Panc1 (cell line): ENCODE measurements at regions of chr5 and their contacts with region 1.

Region 1: DNA sequence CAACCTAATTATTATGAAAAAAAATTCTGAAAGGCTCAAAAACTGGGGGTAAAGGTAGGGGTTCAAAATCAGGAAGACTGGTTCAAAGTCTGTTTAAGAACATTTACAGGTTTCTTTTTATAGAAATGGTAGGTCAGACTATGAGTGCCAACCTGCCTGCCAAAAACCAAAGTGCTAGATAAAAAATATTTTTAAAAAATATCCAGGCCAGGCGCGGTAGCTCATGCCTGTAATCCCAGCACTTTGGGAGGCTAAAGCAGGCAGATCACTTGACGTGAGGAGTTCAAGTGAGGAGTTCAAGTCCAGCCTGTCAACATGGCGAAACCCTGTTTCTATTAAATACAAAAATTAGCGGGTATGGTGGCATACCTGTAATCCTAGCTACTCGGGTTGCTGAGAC is 67.0 kb downstream of the NR3C1 start:
- DNase-seq: no peak
- ATAC-seq: no peak
- H3K4me3 ChIP-seq: no peak overlapping the region
- H3K27ac ChIP-seq: no peak overlapping the region
- H3K4me1 ChIP-seq: peaks cover 11% of the 10 kb centered on the region; the same call in 1 of the 2 replicates
- H3K27me3 ChIP-seq: no peaks in the 10 kb centered on the region
- CTCF ChIP-seq: no peak

Region 2: DNA sequence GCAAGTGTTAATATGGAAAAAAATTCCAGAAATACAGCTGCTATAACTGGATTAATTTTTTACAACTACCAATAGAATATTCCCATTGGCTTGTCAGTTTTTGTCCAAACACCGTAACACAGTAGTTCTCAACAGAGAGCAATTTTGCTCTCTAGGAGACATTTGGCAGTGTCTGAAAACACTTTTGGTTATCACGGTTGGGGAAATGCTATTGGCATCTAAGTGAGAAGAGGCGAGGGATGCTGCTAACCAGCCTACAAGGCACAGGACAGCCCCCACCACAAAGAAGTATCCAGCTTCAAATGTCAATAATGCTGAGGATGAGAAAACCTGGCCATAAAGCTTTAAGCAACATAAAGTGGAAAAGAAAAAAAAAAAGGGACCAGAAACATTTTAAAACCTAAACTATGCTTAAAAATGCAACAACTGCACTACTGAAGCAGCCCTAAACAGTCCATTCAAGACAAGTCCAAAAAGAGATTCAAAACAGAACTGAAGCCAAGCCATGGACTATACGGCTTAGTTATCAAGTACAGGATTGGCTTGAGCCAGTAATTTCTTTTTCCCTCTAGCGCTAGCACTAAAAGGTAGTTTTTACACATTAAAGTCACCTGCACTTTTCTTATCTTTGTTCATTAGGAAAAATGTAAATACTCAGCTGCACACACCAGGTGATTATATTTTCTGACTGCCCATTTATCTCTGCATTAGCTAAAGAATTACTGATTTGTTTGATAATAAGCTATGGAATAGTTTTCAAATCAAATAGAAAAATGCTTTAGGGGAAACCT is 16.9 kb before region 1 on chr5:
- CTCF ChIA-PET with region 1: no interaction called
- POLR2A ChIA-PET with region 1: interaction called, 10 read pairs
- in situ Hi-C with region 1: no loop called
- intact Hi-C with region 1: no loop called
- DNase-seq: no peak
- ATAC-seq: no peak
- H3K4me3 ChIP-seq: no peak overlapping the region
- H3K27ac ChIP-seq: no peak overlapping the region
- H3K4me1 ChIP-seq: peaks cover 22% of the 10 kb centered on the region
- H3K27me3 ChIP-seq: no peaks in the 10 kb centered on the region
- CTCF ChIP-seq: no peak

Region 3: GRCh38 chr5:143806579-143806978 is 470.1 kb after region 1 on chr5:
- CTCF ChIA-PET with region 1: no interaction called
- POLR2A ChIA-PET with region 1: no interaction called
- in situ Hi-C with region 1: no loop called
- intact Hi-C with region 1: no loop called
- DNase-seq: no peak
- ATAC-seq: no peak
- H3K4me3 ChIP-seq: no peak overlapping the region
- H3K27ac ChIP-seq: no peak overlapping the region
- H3K4me1 ChIP-seq: no peaks in the 10 kb centered on the region
- H3K27me3 ChIP-seq: 0 out of 2 replicates have a peak, but pooled peaks cover 4% of the 10 kb centered on the region
- CTCF ChIP-seq: no peak

Region 4: DNA sequence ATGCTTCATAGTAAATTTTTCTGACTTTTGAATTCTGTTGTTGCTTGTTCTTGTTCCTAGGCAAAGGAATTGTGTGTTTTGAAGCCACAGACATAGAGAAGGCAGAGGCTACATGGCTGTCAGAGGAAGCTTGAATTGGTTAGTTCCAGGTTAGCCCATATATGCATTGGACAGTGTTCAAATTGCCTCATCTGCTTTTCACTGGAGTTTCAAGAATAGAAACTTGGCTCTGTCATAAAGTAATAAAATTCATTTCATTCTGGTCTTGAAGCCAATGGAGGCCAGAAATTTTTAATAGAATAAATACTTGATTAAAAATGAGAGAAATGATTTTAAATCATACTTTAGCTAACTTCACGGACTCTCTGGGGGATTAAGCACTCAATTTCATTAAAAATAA is 656.0 kb after region 1 on chr5:
- CTCF ChIA-PET with region 1: no interaction called
- POLR2A ChIA-PET with region 1: no interaction called
- in situ Hi-C with region 1: no loop called
- intact Hi-C with region 1: no loop called
- DNase-seq: no peak
- ATAC-seq: no peak
- H3K4me3 ChIP-seq: no peak overlapping the region
- H3K27ac ChIP-seq: no peak overlapping the region
- H3K4me1 ChIP-seq: no peaks in the 10 kb centered on the region
- H3K27me3 ChIP-seq: no peaks in the 10 kb centered on the region
- CTCF ChIP-seq: no peak